ENCODE measurements at regions of chr22 and their contacts with region 1.

Region 1: DNA sequence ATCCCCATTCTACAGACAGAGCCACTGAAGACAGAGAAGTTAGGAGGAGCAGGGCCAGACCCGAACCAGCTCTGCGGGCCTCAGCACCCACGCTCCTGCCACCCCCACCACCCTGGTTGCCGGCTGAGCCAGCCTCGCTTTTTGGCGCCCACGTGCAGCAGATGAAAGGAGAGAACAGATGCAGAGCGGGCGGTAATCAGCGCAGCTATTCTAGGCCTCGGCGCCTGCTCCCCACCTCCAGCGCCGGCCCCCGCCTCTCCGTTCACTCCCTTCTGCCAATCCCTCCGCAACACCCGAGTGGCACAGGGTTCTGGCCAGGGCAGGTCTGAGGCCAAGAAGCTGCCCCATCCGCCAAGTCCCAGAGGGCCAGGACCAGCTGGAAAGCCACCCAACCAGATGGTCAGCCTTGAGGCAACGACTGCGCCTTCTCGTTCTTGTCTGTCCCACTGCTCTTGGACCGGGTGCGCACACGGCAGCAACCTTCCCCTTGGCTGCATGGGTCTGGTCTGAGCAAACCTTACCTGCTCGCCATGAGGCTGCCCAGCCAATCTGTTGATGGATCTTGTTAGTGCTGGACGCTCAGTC is 16.8 kb downstream of the DNAL4 start:
- DNase-seq: peak in 2 of 5 donors; percentile 56 to 65
- ATAC-seq: peak in 3 of 4 donors; percentile 35 to 43 (median 42)
- H3K4me3 ChIP-seq: no peak overlapping the region
- H3K27ac ChIP-seq: no peak overlapping the region
- H3K4me1 ChIP-seq: peaks cover 0 to 23% (median 10%) of the 10 kb centered on the region in 12 donors
- H3K27me3 ChIP-seq: no peaks in the 10 kb centered on the region
- CTCF ChIP-seq: no peak
- POLR2A ChIP-seq: no peak

Region 2: DNA sequence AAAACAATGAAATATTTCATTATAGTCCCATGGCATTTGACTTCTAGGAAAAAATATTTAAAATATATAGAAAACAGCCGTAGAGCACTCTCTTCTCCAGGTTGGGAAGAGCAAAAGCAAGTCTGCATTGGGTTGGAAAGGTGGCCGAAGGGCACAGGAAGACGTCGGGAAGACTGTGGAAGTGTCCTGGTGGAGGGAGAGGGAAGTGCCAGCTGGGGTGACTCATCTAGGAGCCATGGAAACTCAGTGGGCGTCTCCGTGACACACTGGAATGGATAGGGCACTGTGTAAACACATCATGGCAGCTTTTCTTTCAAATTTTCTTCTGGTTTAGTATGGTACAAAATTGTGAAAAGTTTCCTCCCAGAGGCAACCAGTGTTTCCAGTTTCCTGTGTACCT is 58.8 kb before region 1 on chr22:
- intact Hi-C with region 1: no loop called
- DNase-seq: peak in 2 of 5 donors; percentile 36 to 63
- ATAC-seq: peak in 3 of 4 donors; percentile 66 to 89 (median 86)
- H3K4me3 ChIP-seq: no peak overlapping the region
- H3K27ac ChIP-seq: peak overlapping the region in 2 of 12 donors; percentile 25 to 49
- H3K4me1 ChIP-seq: peaks cover 0 to 28% (median 17%) of the 10 kb centered on the region in 12 donors
- H3K27me3 ChIP-seq: no peaks in the 10 kb centered on the region
- CTCF ChIP-seq: peak in 8 of 12 donors; percentile 21 to 60 (median 34)
- POLR2A ChIP-seq: no peak

Region 3: DNA sequence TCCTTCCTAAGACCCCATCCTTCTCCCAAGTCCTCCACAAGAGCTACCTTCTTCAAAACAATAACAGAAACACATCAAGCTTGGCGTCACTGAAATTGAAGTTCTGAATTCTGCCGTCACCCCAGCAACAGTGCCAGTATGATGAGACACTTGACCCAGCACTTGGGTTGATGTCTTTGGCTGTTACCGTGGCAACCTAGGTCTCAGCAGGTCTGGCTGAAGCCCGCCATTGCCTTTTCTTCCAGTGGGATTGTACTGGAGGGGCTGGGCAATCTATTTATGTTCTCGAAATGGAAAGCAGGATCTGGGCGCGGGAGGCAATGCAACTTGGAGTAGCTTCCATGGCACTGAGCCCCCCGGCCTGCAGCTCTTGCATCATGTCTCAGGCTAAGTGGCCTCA is 42.8 kb after region 1 on chr22:
- intact Hi-C with region 1: no loop called
- DNase-seq: no peak
- ATAC-seq: no peak
- H3K4me3 ChIP-seq: no peak overlapping the region
- H3K27ac ChIP-seq: no peak overlapping the region
- H3K4me1 ChIP-seq: no peaks in the 10 kb centered on the region
- H3K27me3 ChIP-seq: no peaks in the 10 kb centered on the region
- CTCF ChIP-seq: no peak
- POLR2A ChIP-seq: no peak

Region 4: DNA sequence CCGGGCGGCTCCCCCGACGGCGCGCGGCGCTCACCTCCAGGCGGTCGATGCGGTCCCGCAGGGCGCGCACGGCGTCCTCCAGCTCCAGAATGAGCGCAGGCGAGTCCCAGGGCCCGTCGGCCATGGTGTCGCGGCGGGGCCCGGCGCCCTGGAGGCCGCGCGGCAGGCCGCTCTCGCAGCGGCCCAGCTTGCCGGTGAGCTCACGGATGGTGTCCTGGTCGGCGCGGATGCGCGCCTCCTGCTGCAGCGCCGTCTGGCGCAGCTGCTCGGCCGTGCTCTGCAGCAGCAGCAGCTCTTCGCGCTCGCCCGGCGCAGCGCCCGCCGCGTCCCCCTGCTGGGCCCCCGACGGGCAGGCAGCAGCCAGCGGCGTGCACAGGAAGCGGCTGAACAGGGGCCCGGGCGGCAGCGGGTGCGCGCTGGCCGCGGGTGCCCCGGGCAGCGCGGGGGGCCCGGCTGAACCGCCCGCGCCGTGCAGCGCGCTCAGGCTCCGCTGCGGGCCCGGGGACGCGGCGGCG is 66.1 kb after region 1 on chr22:
- intact Hi-C with region 1: loop called in 5 of 10 experiments (anchors 2 to 10 kb)
- DNase-seq: peak; percentile 34 to 77 (median 55)
- ATAC-seq: peak; percentile 56 to 76 (median 74)
- H3K4me3 ChIP-seq: peak overlapping the region; percentile 40 to 69 (median 55)
- H3K27ac ChIP-seq: peak overlapping the region in 10 of 12 donors; percentile 53 to 80 (median 64)
- H3K4me1 ChIP-seq: peaks cover 0 to 27% (median 9%) of the 10 kb centered on the region in 12 donors
- H3K27me3 ChIP-seq: peaks cover 0 to 45% (median 2%) of the 10 kb centered on the region in 9 donors
- CTCF ChIP-seq: peak in 11 of 12 donors; percentile 10 to 54 (median 32)
- POLR2A ChIP-seq: no peak

Region 5: DNA sequence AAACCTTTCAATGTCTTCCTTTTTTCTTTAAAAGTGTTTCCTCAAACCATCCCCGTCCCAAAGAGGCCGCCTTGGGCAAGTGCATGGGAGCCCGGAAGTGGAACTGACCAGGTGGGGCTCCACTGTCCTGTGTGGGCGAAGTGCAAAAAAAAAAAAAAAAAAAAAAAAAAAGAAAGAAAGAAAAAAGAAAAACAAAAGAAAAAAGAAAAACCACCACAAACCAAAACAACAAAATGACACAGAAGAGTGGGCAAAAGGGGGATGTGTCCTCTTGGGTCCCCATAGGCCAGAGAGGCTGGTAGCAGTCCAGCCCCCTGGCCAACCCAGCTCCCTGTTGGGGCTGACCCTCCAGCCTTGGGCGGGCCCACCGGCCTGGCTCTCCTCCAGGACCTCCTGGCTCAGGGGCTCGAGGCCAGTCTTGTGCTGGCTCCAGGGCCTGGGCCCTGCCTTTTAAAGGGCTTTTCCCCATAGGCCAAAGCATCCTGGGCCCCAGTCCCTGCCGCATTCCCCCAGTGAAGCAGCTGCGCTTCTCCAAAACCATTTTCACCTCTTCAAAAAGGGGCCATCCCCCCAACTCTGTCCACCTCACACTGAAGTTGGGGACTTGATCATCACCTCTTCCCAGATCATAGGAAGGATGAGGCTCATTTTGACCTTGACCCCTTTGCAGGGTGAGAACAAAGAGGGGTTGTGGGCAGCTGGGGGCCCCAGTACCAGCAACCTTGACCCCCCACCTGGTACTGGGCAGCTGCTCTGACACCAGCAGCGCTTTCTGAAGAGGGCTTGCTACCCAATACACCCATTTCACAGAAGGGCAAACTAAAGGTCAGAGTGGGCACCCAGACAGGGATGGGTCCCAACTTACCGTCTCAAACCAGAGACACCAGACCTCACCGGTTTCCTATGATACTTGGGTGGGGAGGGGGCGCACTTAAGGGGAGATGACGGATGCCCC is 85.5 kb after region 1 on chr22:
- intact Hi-C with region 1: loop called in 3 of 10 experiments (anchors 5 kb)
- DNase-seq: peak in 3 of 5 donors; percentile 44 to 69 (median 66)
- ATAC-seq: peak in 3 of 4 donors; percentile 30 to 35 (median 31)
- H3K4me3 ChIP-seq: no peak overlapping the region
- H3K27ac ChIP-seq: peak overlapping the region in 2 of 12 donors; percentile 19 to 82
- H3K4me1 ChIP-seq: peaks cover 10 to 63% (median 38%) of the 10 kb centered on the region in 12 donors
- H3K27me3 ChIP-seq: no peaks in the 10 kb centered on the region
- CTCF ChIP-seq: no peak
- POLR2A ChIP-seq: no peak

Region 6: GRCh38 chr22:38881464-38881871 is 104.3 kb after region 1 on chr22:
- intact Hi-C with region 1: no loop called
- DNase-seq: peak in 2 of 5 donors; percentile 56
- ATAC-seq: peak; percentile 72 to 79 (median 72)
- H3K4me3 ChIP-seq: peak overlapping the region in 1 of 12 donors; percentile 9
- H3K27ac ChIP-seq: peak overlapping the region; percentile 63 to 90 (median 82)
- H3K4me1 ChIP-seq: peaks cover 8 to 24% (median 17%) of the 10 kb centered on the region in 12 donors
- H3K27me3 ChIP-seq: no peaks in the 10 kb centered on the region
- CTCF ChIP-seq: peak in 2 of 12 donors; percentile 9 to 13
- POLR2A ChIP-seq: no peak

Region 7: GRCh38 chr22:39003165-39003638 is 226.0 kb after region 1 on chr22:
- intact Hi-C with region 1: loop called in 1 of 10 experiments (anchors 10 kb)
- DNase-seq: peak; percentile 67 to 81 (median 75)
- ATAC-seq: peak; percentile 81 to 94 (median 92)
- H3K4me3 ChIP-seq: no peak overlapping the region
- H3K27ac ChIP-seq: no peak overlapping the region
- H3K4me1 ChIP-seq: peaks cover 0 to 12% (median 1%) of the 10 kb centered on the region in 12 donors
- H3K27me3 ChIP-seq: peaks cover 0 to 5% (median 0%) of the 10 kb centered on the region in 9 donors
- CTCF ChIP-seq: peak; percentile 63 to 86 (median 75)
- POLR2A ChIP-seq: no peak

Region 8: DNA sequence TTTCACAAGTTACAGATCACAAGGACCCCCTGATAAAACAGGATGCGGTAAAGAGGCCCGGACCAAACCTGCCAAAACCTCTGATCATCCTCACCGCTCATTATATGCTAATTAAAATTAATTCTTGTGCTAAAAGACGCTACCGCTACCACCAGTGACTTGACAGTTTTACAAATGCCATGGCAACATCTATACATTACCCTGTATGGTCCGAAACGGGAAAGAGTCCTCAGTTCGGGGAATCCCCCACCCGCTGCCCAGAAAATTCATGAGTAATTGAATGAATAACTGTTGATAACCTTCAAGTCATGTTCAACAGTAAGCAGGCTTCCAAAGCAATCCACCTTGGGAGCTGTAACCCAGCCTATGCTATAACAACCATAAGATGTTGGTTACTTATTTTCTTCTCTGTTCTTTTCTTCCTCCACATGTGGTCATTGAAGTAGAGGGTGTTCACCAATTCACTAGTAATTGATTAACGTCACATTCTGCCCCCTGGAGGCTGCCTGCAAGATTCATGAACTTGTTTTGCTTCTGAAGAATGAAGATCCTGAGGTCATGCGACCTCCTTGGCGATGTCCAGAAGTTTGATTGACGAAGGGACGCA is 340.5 kb after region 1 on chr22:
- intact Hi-C with region 1: loop called in 3 of 10 experiments (anchors 5 to 10 kb)
- DNase-seq: peak in 2 of 5 donors; percentile 51 to 52
- ATAC-seq: no peak
- H3K4me3 ChIP-seq: peak overlapping the region in 1 of 12 donors; percentile 8
- H3K27ac ChIP-seq: peak overlapping the region in 1 of 12 donors; percentile 62
- H3K4me1 ChIP-seq: peaks cover 0 to 12% (median 0%) of the 10 kb centered on the region in 12 donors
- H3K27me3 ChIP-seq: peaks cover 0 to 28% (median 6%) of the 10 kb centered on the region in 9 donors
- CTCF ChIP-seq: peak in 10 of 12 donors; percentile 21 to 55 (median 40)
- POLR2A ChIP-seq: no peak

Region 9: GRCh38 chr22:39123751-39124601 is 346.8 kb after region 1 on chr22:
- intact Hi-C with region 1: loop called in 3 of 10 experiments (anchors 5 to 10 kb)
- DNase-seq: no peak
- ATAC-seq: peak in 1 of 4 donors; percentile 48
- H3K4me3 ChIP-seq: no peak overlapping the region
- H3K27ac ChIP-seq: no peak overlapping the region
- H3K4me1 ChIP-seq: peaks cover 0 to 4% (median 0%) of the 10 kb centered on the region in 12 donors
- H3K27me3 ChIP-seq: no peaks in the 10 kb centered on the region
- CTCF ChIP-seq: no peak
- POLR2A ChIP-seq: no peak